ENCODE measurements at regions of chr2 and their contacts with region 1.

Region 1: DNA sequence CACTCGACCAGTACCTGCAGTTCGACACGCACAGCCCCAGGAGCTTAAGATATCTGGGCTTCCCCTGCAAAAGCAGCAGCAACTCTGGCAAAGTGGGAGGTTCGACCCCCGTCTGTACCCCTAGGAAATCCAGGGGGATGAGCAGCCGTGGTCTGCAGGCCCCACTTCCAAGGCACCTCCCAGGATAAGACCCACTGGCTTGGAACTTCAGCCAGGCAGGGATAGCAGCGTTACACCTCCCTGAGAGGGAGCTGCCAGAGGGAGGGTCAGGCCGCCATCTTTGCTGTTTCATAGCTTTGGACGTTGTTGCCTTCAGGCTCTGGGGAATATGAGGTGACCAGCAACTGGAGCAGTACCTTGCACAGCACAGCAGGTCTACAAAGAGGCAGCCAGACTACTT is 351.1 kb downstream of the SOX11 start:
- DNase-seq: no peak
- H3K4me3 ChIP-seq: no peak overlapping the region
- H3K27ac ChIP-seq: no peak overlapping the region
- H3K4me1 ChIP-seq: no peaks in the 10 kb centered on the region
- H3K27me3 ChIP-seq: no peaks in the 10 kb centered on the region
- CTCF ChIP-seq: no peak
- EP300 ChIP-seq: no peak
- POLR2A ChIP-seq: no peak

Region 2: DNA sequence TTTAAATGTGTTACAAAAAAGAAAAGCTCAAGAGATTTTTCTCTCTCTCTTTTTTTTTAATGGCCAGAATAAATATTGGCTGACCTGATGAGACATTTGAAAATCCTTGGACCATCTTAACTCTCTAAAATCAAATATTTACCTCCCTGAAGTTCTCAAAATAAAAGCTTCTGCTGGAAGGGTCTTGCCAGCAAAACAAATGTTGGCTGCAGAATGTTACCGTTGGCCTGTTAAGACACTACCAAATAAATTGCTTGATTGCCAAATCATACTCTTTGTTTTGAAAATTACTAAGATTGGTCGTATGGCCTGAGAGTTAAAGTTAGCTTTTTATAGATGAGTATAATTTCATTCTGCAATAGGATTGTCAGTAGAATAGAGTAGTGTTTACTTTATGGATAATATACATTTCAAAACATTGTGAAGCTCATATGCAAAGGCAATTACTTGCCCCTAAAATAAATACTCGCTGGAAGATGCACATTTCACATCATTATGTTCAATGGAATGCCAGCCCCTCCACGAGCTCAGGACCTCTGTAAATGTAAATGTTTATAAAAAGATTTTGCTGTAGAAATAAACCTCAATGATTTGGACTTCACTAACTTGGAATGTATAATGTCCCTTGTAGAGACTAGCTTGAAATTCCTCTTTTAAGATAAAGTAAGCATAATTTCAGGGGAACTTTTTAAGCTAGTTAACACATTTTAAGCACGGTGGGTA is 157.6 kb before region 1 on chr2:
- intact Hi-C with region 1: loop called in 1 of 4 experiments (anchors 5 kb)
- DNase-seq: no peak
- H3K4me3 ChIP-seq: no peak overlapping the region
- H3K27ac ChIP-seq: no peak overlapping the region
- H3K4me1 ChIP-seq: no peaks in the 10 kb centered on the region
- H3K27me3 ChIP-seq: no peaks in the 10 kb centered on the region
- CTCF ChIP-seq: no peak
- EP300 ChIP-seq: no peak
- POLR2A ChIP-seq: no peak

Region 3: GRCh38 chr2:6372317-6372901 is 329.2 kb after region 1 on chr2:
- intact Hi-C with region 1: no loop called
- DNase-seq: no peak
- H3K4me3 ChIP-seq: no peak overlapping the region
- H3K27ac ChIP-seq: no peak overlapping the region
- H3K4me1 ChIP-seq: no peaks in the 10 kb centered on the region
- H3K27me3 ChIP-seq: no peaks in the 10 kb centered on the region
- CTCF ChIP-seq: no peak
- EP300 ChIP-seq: no peak
- POLR2A ChIP-seq: no peak

Measured in ovary (tissue), 10 donors.